Naive thymus-derived CD4-positive, alpha-beta T cell (primary cell): ENCODE measurements at regions of chr6 and their contacts with region 1.

Region 1: GRCh38 chr6:139050770-139051313 is 22.3 kb downstream of the ABRACL start:
- DNase-seq: no peak
- ATAC-seq: no peak
- H3K4me3 ChIP-seq: no peak overlapping the region
- H3K4me3 Mint-ChIP-seq: no peak overlapping the region
- H3K27ac ChIP-seq: no peak overlapping the region
- H3K27ac Mint-ChIP-seq: no peak overlapping the region
- H3K4me1 ChIP-seq: no peaks in the 10 kb centered on the region
- H3K4me1 Mint-ChIP-seq: peaks cover 0 to 16% (median 4%) of the 10 kb centered on the region in 7 donors
- H3K27me3 ChIP-seq: no peaks in the 10 kb centered on the region
- H3K27me3 Mint-ChIP-seq: peaks cover 0 to 7% (median 0%) of the 10 kb centered on the region in 5 donors

Region 2: GRCh38 chr6:137261393-137262160 is 1789.3 kb before region 1 on chr6:
- CTCF ChIA-PET with region 1: no interaction called
- POLR2A ChIA-PET with region 1: no interaction called
- intact Hi-C with region 1: no loop called
- DNase-seq: no peak
- ATAC-seq: peak; percentile 46
- H3K4me3 ChIP-seq: no peak overlapping the region
- H3K4me3 Mint-ChIP-seq: no peak overlapping the region
- H3K27ac ChIP-seq: no peak overlapping the region
- H3K27ac Mint-ChIP-seq: peak overlapping the region in 1 of 9 donors; percentile 11
- H3K4me1 ChIP-seq: peaks cover 0 to 14% of the 10 kb centered on the region in 2 donors
- H3K4me1 Mint-ChIP-seq: peaks cover 0 to 14% (median 4%) of the 10 kb centered on the region in 7 donors
- H3K27me3 ChIP-seq: no peaks in the 10 kb centered on the region
- H3K27me3 Mint-ChIP-seq: peaks cover 7 to 34% (median 22%) of the 10 kb centered on the region in 5 donors

Region 3: DNA sequence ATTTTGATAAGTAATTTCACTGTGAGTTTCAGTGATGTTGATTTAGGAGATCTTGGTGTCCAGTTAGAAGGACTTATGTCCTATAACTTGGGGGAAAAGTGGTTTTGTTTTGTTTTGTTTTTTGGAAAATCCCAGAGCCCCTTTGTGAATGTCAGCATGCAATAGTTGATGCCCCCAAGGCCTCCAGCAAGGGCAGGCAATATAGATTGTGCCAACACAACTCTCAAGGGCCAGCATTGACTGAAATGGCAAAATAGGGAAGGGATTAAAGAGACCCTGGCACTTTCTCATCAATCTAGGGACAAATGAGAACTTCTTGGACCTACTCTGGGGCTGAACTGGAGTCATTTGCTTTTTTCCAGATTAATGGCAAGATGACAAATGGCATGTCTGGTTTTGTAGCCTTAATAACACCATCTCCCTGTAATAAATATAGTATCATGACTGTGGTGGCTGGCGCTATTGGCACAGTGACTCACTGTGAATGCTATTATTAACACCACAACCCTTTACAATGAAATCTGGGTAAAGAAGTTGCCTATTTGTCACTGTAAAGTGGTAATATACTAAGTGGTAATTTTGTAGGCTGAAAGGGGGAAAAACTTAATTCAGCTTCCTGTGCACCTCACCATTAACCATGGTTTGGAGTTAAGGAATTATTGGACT is 29.5 kb after region 1 on chr6:
- CTCF ChIA-PET with region 1: no interaction called
- POLR2A ChIA-PET with region 1: no interaction called
- intact Hi-C with region 1: loop called in 1 of 2 experiments (anchors 5 kb)
- DNase-seq: no peak
- ATAC-seq: no peak
- H3K4me3 ChIP-seq: no peak overlapping the region
- H3K4me3 Mint-ChIP-seq: no peak overlapping the region
- H3K27ac ChIP-seq: no peak overlapping the region
- H3K27ac Mint-ChIP-seq: no peak overlapping the region
- H3K4me1 ChIP-seq: no peaks in the 10 kb centered on the region
- H3K4me1 Mint-ChIP-seq: peaks cover 0 to 11% (median 8%) of the 10 kb centered on the region in 7 donors
- H3K27me3 ChIP-seq: no peaks in the 10 kb centered on the region
- H3K27me3 Mint-ChIP-seq: no peaks in the 10 kb centered on the region

Region 4: DNA sequence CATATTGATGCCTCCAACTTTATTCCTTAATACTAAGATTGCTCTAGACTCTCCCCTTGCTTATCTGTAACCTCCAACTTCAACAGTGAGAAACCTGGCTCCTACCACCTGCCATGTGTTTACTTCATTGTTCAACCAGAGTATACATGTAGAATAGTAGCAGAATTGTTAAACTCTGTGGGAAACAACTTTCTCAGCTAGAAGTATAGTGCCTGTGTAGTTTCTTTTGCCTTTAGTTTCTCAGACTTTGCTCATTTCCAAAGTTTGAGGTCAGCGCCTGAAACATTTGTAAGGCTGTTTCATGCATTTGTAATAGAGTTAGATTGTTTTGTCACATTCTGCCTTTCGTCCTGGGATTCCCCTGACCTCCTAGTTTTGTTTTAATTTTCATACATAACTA is 49.1 kb after region 1 on chr6:
- CTCF ChIA-PET with region 1: no interaction called
- POLR2A ChIA-PET with region 1: no interaction called
- intact Hi-C with region 1: loop called in 1 of 2 experiments (anchors 5 kb)
- DNase-seq: no peak
- ATAC-seq: no peak
- H3K4me3 ChIP-seq: no peak overlapping the region
- H3K4me3 Mint-ChIP-seq: no peak overlapping the region
- H3K27ac ChIP-seq: no peak overlapping the region
- H3K27ac Mint-ChIP-seq: no peak overlapping the region
- H3K4me1 ChIP-seq: no peaks in the 10 kb centered on the region
- H3K4me1 Mint-ChIP-seq: peaks cover 0 to 17% (median 11%) of the 10 kb centered on the region in 7 donors
- H3K27me3 ChIP-seq: no peaks in the 10 kb centered on the region
- H3K27me3 Mint-ChIP-seq: peaks cover 0 to 3% (median 0%) of the 10 kb centered on the region in 5 donors